ENCODE measurements at regions of chr12 and their contacts with region 1.

Region 1: GRCh38 chr12:64801381-64801780 is 23.1 kb upstream of the TBC1D30 start:
- DNase-seq: no peak
- ATAC-seq: peak; percentile 61
- H3K4me3 Mint-ChIP-seq: no peak overlapping the region
- H3K27ac Mint-ChIP-seq: no peak overlapping the region
- H3K4me1 Mint-ChIP-seq: no peaks in the 10 kb centered on the region
- H3K27me3 Mint-ChIP-seq: peaks cover 4% of the 10 kb centered on the region; the same call in 1 of the 2 replicates
- CTCF ChIP-seq: no peak

Region 2: GRCh38 chr12:64332938-64333337 is 468.4 kb before region 1 on chr12:
- CTCF ChIA-PET with region 1: no interaction called
- POLR2A ChIA-PET with region 1: no interaction called
- DNase-seq: no peak
- ATAC-seq: no peak
- H3K4me3 Mint-ChIP-seq: no peak overlapping the region
- H3K27ac Mint-ChIP-seq: no peak overlapping the region
- H3K4me1 Mint-ChIP-seq: 0 out of 2 replicates have a peak, but pooled peaks cover 3% of the 10 kb centered on the region
- H3K27me3 Mint-ChIP-seq: no peaks in the 10 kb centered on the region
- CTCF ChIP-seq: no peak

Region 3: GRCh38 chr12:64733857-64734256 is 67.5 kb before region 1 on chr12:
- CTCF ChIA-PET with region 1: no interaction called
- POLR2A ChIA-PET with region 1: no interaction called
- DNase-seq: no peak
- ATAC-seq: no peak
- H3K4me3 Mint-ChIP-seq: no peak overlapping the region
- H3K27ac Mint-ChIP-seq: no peak overlapping the region
- H3K4me1 Mint-ChIP-seq: no peaks in the 10 kb centered on the region
- H3K27me3 Mint-ChIP-seq: no peaks in the 10 kb centered on the region
- CTCF ChIP-seq: no peak

Region 4: DNA sequence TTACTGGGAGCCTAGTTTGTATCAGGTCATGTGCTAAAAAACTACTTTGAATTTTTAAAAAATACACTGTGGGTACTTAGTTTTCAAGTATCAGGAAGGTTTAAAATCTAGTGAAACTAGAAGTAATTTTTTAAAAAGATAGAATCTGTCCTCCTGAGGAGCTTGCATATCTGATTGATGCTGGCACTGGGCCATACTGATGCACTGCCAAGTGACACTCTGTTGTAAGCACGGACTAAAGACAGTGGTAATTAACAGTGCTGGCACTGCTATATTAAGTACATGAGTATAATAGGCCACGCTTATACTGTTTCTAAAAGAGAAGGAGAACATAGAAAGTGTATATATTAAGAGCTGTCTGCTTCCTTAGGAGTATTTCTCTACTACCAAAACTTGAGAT is 13.1 kb after region 1 on chr12:
- CTCF ChIA-PET with region 1: interaction called, 14 read pairs
- POLR2A ChIA-PET with region 1: no interaction called
- DNase-seq: no peak
- ATAC-seq: no peak
- H3K4me3 Mint-ChIP-seq: no peak overlapping the region
- H3K27ac Mint-ChIP-seq: no peak overlapping the region
- H3K4me1 Mint-ChIP-seq: peaks cover 9% of the 10 kb centered on the region
- H3K27me3 Mint-ChIP-seq: no peaks in the 10 kb centered on the region; the same call in 1 of the 2 replicates
- CTCF ChIP-seq: no peak

Region 5: GRCh38 chr12:64864319-64864718 is 62.9 kb after region 1 on chr12:
- CTCF ChIA-PET with region 1: interaction called, 15 read pairs
- POLR2A ChIA-PET with region 1: no interaction called
- DNase-seq: no peak
- ATAC-seq: no peak; the same call in none of the 2 replicates
- H3K4me3 Mint-ChIP-seq: no peak overlapping the region
- H3K27ac Mint-ChIP-seq: no peak overlapping the region
- H3K4me1 Mint-ChIP-seq: peaks cover 20% of the 10 kb centered on the region
- H3K27me3 Mint-ChIP-seq: peaks cover 12% of the 10 kb centered on the region
- CTCF ChIP-seq: no peak

Region 6: DNA sequence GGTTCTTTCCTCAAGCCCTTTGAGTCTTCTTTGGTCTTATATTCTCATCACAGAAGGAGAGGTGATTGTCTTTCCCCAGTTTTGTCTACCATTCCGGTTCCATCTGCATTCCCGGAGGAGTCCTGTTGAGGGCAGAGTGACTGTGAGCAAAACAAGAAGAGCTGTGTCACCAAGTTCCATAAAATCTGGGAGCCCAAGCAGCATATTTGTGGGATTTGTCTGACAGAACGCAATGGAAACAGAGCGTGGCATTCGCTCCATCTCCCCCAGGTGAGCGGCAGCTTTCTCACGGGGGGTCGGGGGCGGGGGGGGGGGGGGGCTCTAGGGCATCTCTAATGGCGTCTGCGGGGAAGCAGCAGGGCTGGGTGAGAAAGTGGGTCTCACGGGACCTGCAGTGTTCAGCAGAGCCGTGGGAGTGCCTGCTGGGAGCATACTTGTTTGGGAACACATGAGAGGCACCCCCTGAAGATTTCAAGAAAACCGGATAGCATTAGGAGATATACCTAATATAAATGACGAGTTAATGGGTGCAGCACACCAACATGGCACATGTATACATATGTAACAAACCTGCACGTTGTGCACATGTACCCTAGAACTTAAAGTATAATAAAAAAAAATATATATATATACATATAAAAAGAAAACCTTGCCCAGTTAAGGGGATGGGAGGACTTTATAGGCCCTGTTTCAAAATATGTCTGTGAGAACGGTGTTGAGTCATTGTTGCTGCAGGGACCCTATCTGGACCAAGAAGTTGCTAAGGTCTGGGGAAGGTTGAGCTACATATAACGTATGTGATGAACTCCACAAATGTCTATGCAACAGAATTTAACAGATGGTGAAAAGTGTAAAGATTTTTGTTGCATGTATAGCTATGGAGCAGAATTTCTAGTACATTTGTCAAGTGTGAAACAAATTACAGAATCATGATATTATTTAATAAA is 82.5 kb after region 1 on chr12:
- CTCF ChIA-PET with region 1: interaction called, 33 read pairs
- POLR2A ChIA-PET with region 1: no interaction called
- DNase-seq: no peak
- ATAC-seq: peak; percentile 88
- H3K4me3 Mint-ChIP-seq: no peak overlapping the region
- H3K27ac Mint-ChIP-seq: 0 out of 2 replicates have a peak overlapping the region, but pooled peaks have one; percentile 8
- H3K4me1 Mint-ChIP-seq: peaks cover 11% of the 10 kb centered on the region
- H3K27me3 Mint-ChIP-seq: peaks cover 36% of the 10 kb centered on the region
- CTCF ChIP-seq: no peak

Region 7: GRCh38 chr12:64916411-64917261 is 115.3 kb after region 1 on chr12:
- CTCF ChIA-PET with region 1: interaction called, 12 read pairs
- POLR2A ChIA-PET with region 1: no interaction called
- DNase-seq: no peak
- ATAC-seq: no peak
- H3K4me3 Mint-ChIP-seq: no peak overlapping the region
- H3K27ac Mint-ChIP-seq: no peak overlapping the region
- H3K4me1 Mint-ChIP-seq: peaks cover 20% of the 10 kb centered on the region
- H3K27me3 Mint-ChIP-seq: no peaks in the 10 kb centered on the region
- CTCF ChIP-seq: no peak

Region 8: DNA sequence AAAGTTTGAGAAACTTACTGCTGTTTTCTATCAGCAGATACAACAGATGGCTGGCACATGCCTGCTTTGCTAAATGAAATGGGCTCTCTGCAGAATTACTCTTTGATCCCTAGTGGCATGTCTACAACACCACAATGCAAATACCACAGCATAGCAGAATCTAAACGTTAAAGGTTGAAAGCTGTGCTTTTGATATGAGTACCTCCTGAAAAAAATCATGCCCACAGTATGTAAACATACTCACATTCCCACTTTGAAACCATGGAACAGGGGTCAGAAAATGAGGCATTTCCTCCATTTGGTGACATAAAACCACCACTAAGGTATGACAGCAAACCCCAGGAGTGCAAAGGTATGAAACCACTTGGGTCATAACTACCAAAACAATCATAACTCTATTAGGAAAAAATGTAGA is 312.2 kb after region 1 on chr12:
- CTCF ChIA-PET with region 1: interaction called, 14 read pairs
- POLR2A ChIA-PET with region 1: no interaction called
- DNase-seq: no peak
- ATAC-seq: no peak
- H3K4me3 Mint-ChIP-seq: no peak overlapping the region
- H3K27ac Mint-ChIP-seq: no peak overlapping the region
- H3K4me1 Mint-ChIP-seq: no peaks in the 10 kb centered on the region
- H3K27me3 Mint-ChIP-seq: peaks cover 15% of the 10 kb centered on the region
- CTCF ChIP-seq: no peak